ENCODE measurements at regions of chr11 and their contacts with region 1.

Region 1: GRCh38 chr11:66616379-66617154 is at the start of gene RBM14:
- DNase-seq: peak; percentile 100
- H3K4me3 ChIP-seq: peak within 1 kb of the TSS; percentile 57
- H3K4me3 Mint-ChIP-seq: peak within 1 kb of the TSS; percentile 94
- H3K27ac Mint-ChIP-seq: peak within 1 kb of the TSS; percentile 99
- H3K4me1 ChIP-seq: peaks cover 17% of the 10 kb centered on the region
- H3K4me1 Mint-ChIP-seq: peaks cover 25% of the 10 kb centered on the region
- H3K27me3 ChIP-seq: no peaks in the 10 kb centered on the region
- H3K27me3 Mint-ChIP-seq: no peaks in the 10 kb centered on the region
- CTCF ChIP-seq: no peak
- total RNA-seq, gene RBM14: 160 and 173 TPM in 2 replicates

Region 2: GRCh38 chr11:66545701-66546367 is 70.7 kb before region 1 on chr11 and contains the start of gene ZDHHC24:
- CTCF ChIA-PET with region 1: no interaction called
- POLR2A ChIA-PET with region 1: interaction called, 31 read pairs
- intact Hi-C with region 1: loop called (anchors 5 kb)
- DNase-seq: peak; percentile 99
- H3K4me3 ChIP-seq: peak within 1 kb of the TSS; percentile 59
- H3K4me3 Mint-ChIP-seq: peak within 1 kb of the TSS; percentile 84
- H3K27ac Mint-ChIP-seq: peak within 1 kb of the TSS; percentile 60
- H3K4me1 ChIP-seq: peaks cover 22% of the 10 kb centered on the region
- H3K4me1 Mint-ChIP-seq: peaks cover 15% of the 10 kb centered on the region
- H3K27me3 ChIP-seq: no peaks in the 10 kb centered on the region
- H3K27me3 Mint-ChIP-seq: no peaks in the 10 kb centered on the region
- CTCF ChIP-seq: no peak
- total RNA-seq, gene ZDHHC24: 25.1 and 26.9 TPM in 2 replicates

Region 3: GRCh38 chr11:66592457-66593302 is 23.9 kb before region 1 on chr11 and contains the starts of genes CCDC87 and CCS:
- CTCF ChIA-PET with region 1: interaction called, 12 read pairs
- POLR2A ChIA-PET with region 1: interaction called, 37 read pairs
- intact Hi-C with region 1: loop called (anchors 1 kb)
- DNase-seq: peak; percentile 99 to 100
- H3K4me3 ChIP-seq: peak within 1 kb of the TSS; percentile 68
- H3K4me3 Mint-ChIP-seq: peak within 1 kb of the TSS; percentile 79
- H3K27ac Mint-ChIP-seq: peak within 1 kb of the TSS; percentile 90
- H3K4me1 ChIP-seq: peaks cover 23% of the 10 kb centered on the region
- H3K4me1 Mint-ChIP-seq: peaks cover 6% of the 10 kb centered on the region
- H3K27me3 ChIP-seq: no peaks in the 10 kb centered on the region
- H3K27me3 Mint-ChIP-seq: no peaks in the 10 kb centered on the region
- CTCF ChIP-seq: peak; percentile 93 to 99
- total RNA-seq, gene CCDC87: 1.0 TPM in 2 replicates
- total RNA-seq, gene CCS: 52.9 and 54.0 TPM in 2 replicates

Region 4: GRCh38 chr11:66659763-66660162 is 43.2 kb after region 1 on chr11:
- CTCF ChIA-PET with region 1: interaction called, 3 read pairs
- POLR2A ChIA-PET with region 1: interaction called, 24 read pairs
- intact Hi-C with region 1: no loop called
- DNase-seq: no peak
- H3K4me3 ChIP-seq: no peak overlapping the region
- H3K4me3 Mint-ChIP-seq: peak overlapping the region; percentile 1
- H3K27ac Mint-ChIP-seq: peak overlapping the region; percentile 1
- H3K4me1 ChIP-seq: peaks cover 8% of the 10 kb centered on the region
- H3K4me1 Mint-ChIP-seq: peaks cover 12% of the 10 kb centered on the region
- H3K27me3 ChIP-seq: no peaks in the 10 kb centered on the region
- H3K27me3 Mint-ChIP-seq: no peaks in the 10 kb centered on the region
- CTCF ChIP-seq: no peak

Region 5: DNA sequence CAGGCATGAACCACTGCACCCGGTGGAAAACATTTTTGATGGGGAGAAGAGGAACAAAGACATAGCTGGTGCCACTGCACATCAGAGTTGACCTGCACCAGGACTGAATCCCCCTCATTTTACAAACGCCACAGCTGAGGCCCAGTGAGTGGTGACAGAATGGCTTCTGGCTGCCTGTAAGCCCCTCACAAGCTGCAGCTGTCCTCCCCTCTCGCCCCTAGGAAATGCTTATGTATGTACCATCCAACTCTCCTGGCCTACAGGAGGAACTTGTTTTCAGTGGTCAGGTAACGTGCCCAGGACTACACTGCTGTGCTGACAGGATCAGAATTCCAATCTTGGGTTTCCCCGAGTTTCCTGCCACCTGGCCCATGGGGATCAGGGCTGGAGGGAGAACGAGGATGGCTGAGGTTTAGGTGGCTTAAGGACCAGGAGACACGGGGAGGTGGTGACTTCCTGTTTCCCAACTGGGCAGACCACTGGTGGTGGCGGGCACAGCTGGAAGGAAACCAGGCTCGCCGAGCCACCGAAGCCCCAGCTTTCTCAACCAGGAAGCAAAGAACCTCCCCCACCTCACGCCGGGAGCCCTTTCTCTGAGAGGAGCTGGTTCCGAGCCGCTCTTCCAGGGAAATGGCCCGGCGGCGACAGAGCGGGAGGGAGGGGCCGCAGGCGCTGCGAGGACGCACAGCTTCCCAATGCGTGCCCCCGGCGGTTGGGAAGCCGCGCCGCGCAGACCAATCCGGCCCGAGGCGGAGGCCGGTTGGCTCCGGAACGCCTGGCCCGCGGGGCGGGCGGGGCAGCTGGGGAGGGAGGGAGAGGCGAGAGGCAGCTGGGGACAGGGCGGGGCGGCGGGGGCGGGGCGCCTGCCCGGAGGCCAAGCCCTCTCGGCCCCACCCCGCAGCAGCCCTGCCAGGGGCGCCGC is 239.3 kb after region 1 on chr11:
- CTCF ChIA-PET with region 1: no interaction called
- POLR2A ChIA-PET with region 1: interaction called, 12 read pairs
- intact Hi-C with region 1: no loop called
- DNase-seq: peak; percentile 98 to 99
- H3K4me3 ChIP-seq: peak overlapping the region; percentile 94
- H3K4me3 Mint-ChIP-seq: peak overlapping the region; percentile 96
- H3K27ac Mint-ChIP-seq: peak overlapping the region; percentile 95
- H3K4me1 ChIP-seq: peaks cover 9% of the 10 kb centered on the region
- H3K4me1 Mint-ChIP-seq: peaks cover 8% of the 10 kb centered on the region
- H3K27me3 ChIP-seq: no peaks in the 10 kb centered on the region
- H3K27me3 Mint-ChIP-seq: no peaks in the 10 kb centered on the region
- CTCF ChIP-seq: no peak

Region 6: GRCh38 chr11:66987158-66987620 is 370.6 kb after region 1 on chr11:
- CTCF ChIA-PET with region 1: no interaction called
- POLR2A ChIA-PET with region 1: no interaction called
- intact Hi-C with region 1: no loop called
- DNase-seq: no peak
- H3K4me3 ChIP-seq: no peak overlapping the region
- H3K4me3 Mint-ChIP-seq: no peak overlapping the region
- H3K27ac Mint-ChIP-seq: no peak overlapping the region
- H3K4me1 ChIP-seq: no peaks in the 10 kb centered on the region
- H3K4me1 Mint-ChIP-seq: no peaks in the 10 kb centered on the region
- H3K27me3 ChIP-seq: no peaks in the 10 kb centered on the region
- H3K27me3 Mint-ChIP-seq: peaks cover 3% of the 10 kb centered on the region
- CTCF ChIP-seq: no peak